Sigmoid colon (tissue), 7 donors: ENCODE measurements at regions of chrX and their contacts with region 1.

Region 1: DNA sequence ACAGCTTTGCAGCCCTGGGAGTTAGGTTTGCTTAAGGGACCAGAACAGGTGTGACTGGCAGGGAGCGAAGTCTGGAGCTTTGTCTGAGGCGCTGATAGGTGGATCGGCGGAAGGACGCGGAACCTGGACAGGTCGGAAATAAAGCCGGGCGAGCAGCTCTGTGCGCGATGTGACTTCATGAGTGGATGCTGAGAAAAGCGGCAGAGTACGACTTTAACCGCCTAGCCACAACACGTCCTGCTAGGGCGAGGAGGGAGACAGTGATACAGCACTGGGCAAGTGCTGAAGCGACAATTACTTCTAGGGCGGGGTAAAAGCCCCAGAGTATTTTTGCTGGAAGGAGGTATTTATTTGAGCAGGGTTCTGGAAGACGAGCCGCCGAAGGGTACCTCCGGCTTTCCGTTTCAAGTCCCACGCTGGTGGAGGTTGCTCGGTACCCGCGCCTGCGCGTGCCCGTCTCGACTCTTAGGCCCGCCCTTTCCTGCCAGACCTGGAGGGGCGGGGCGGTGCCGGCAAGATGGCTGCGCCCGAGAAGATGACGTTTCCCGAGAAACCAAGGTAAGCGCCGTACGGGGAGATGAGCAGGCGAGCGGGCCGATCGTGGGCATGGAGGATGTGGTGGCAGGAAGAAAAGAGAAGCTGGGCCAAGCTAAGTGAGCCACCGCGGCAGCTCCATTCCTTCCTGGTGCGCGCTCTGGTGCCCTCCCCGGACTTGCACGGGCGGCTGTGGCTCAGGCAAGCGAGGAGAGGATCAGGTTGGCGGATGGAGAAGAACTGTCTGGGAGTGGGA is at the start of gene ZRSR2:
- DNase-seq: peak; percentile 92
- H3K4me3 ChIP-seq: peak within 1 kb of the TSS; percentile 59 to 88 (median 63)
- H3K27ac ChIP-seq: peak within 1 kb of the TSS; percentile 80 to 90 (median 84)
- H3K4me1 ChIP-seq: peaks cover 0 to 23% (median 4%) of the 10 kb centered on the region in 4 donors
- H3K27me3 ChIP-seq: no peaks in the 10 kb centered on the region
- CTCF ChIP-seq: no peak
- EP300 ChIP-seq: no peak
- POLR2A ChIP-seq: peak; percentile 46 to 48
- total RNA-seq, gene ZRSR2: 6.8 to 13.8 (median 11.8) TPM

Region 2: DNA sequence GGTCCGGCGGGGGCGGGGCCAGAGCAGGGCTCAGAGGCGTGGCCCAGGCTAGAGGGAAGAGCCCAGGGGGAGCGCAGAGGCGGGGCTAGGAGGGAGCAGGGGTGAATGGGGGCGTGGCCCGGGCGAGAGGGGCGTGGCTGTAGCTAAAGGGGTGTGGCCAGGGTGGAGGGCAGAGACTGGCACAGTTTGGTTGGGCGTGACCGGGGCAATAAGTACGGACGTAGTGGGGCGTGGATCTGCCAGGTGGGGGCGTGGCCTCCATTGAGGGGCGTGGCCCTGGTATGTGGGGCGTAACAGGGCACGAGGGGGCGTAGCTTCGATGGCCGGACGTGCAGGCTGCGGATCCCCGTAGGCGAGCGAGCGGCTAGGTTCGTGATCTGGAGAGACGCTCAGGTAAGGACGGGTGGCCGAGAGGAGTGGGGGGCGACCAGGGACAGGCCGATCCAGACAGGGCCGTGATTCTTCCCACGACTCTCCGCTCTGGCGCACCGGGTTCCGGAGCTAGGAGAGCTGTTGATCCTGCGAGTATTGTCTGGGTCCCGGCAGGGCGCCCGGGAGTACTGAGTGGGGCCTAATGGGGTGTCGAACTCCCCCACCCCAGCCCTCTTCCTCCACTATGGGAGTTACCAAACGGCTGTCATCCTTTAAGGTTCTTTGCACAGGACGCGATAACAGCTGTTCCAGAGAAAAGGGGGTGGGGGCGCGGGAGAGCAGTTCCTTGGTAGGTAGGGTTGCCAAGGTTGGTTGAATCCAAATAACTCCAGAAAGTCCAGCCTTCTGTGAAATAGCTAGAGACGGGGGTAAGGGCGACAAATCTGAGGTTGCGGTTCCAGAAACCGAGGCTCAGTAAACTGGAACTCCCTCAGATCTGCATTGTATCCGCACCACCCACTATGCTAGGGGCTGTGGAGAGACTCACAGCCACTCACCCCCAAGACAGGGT is 51.9 kb before region 1 on chrX and contains the start of gene CA5B:
- intact Hi-C with region 1: loop called (anchors 1 kb)
- DNase-seq: peak; percentile 96
- H3K4me3 ChIP-seq: peak within 1 kb of the TSS; percentile 25 to 56 (median 46)
- H3K27ac ChIP-seq: peak within 1 kb of the TSS; percentile 34 to 40 (median 37)
- H3K4me1 ChIP-seq: peaks cover 0 to 13% (median 0%) of the 10 kb centered on the region in 4 donors
- H3K27me3 ChIP-seq: peaks cover 0 to 6% (median 0%) of the 10 kb centered on the region in 3 donors
- CTCF ChIP-seq: no peak
- EP300 ChIP-seq: no peak
- POLR2A ChIP-seq: no peak
- total RNA-seq, gene CA5B: 3.9 to 8.6 (median 7.1) TPM

Region 3: DNA sequence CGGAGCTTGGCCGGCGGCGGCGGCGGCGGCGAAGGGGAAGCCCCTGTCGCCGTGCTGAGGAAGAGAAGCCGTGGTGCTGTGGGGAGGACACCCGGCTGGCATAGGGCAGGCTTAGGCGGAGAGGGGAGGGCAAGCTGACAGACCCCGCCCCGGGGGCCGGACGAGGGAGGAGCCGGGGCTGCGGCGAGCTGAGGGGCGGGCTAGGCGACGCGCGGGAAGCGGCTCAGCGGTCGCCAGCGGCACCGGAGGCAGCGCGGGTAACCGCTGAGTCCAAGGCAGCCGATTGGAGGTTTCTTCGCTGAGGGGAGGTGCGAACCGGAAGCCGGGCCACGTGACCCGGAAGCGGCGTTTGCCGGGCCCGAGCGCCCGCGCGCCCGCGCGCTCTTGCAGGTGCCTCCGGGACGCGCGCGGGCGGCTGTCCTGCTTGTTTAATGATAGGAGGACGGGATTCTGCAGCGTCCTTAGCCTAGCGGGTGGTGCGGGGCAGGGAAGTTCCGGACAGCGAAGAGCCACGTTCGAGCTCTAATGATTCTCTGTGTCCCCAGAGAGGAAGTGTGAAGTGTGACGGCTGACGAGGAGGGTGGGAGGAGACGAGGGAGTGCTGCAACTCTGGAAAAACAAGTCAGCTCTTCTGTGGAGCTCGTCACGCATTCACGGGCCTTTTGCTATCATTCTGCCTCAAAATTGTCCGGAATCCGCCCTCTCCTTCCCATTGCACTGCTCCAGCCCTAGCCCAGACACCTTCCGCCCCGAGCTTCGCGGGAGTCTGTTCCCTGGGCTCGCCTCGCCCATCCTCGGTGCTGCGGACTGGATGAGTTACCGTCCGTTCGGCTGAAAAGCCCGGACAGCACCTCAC is 64.8 kb after region 1 on chrX and contains the start of gene AP1S2:
- intact Hi-C with region 1: loop called (anchors 1 kb)
- DNase-seq: peak; percentile 97
- H3K4me3 ChIP-seq: peak within 1 kb of the TSS; percentile 44 to 81 (median 76)
- H3K27ac ChIP-seq: peak within 1 kb of the TSS; percentile 83 to 95 (median 89)
- H3K4me1 ChIP-seq: peaks cover 0 to 16% (median 3%) of the 10 kb centered on the region in 4 donors
- H3K27me3 ChIP-seq: peaks cover 0 to 3% (median 0%) of the 10 kb centered on the region in 3 donors
- CTCF ChIP-seq: no peak
- EP300 ChIP-seq: no peak
- POLR2A ChIP-seq: peak; percentile 24 to 25
- total RNA-seq, gene AP1S2: 71.6 to 156 (median 93.5) TPM